Sciatic nerve (tissue), 2 donors: ENCODE measurements at regions of chr16 and their contacts with region 1.

Region 1: DNA sequence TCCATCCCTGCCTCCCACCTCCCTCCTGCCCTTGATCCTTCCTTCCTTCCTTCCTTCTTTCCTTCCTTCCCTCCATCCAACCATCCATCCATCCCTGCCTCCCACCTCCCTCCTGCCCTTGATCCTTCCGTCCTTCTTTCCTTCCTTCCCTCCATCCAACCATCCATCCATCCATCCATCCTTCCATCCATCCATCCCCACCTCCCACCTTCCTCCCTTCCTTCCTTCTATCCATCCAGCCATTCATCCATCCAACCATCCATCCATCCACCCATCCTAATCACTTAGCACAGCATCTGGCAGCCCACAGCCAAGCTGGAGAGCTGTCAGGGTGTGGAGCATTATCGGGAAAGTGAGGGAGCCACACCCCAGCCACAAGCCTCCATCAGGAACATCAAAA is 54.5 kb downstream of the TK2 start:
- DNase-seq: peak; percentile 14
- ATAC-seq: no peak

Region 2: DNA sequence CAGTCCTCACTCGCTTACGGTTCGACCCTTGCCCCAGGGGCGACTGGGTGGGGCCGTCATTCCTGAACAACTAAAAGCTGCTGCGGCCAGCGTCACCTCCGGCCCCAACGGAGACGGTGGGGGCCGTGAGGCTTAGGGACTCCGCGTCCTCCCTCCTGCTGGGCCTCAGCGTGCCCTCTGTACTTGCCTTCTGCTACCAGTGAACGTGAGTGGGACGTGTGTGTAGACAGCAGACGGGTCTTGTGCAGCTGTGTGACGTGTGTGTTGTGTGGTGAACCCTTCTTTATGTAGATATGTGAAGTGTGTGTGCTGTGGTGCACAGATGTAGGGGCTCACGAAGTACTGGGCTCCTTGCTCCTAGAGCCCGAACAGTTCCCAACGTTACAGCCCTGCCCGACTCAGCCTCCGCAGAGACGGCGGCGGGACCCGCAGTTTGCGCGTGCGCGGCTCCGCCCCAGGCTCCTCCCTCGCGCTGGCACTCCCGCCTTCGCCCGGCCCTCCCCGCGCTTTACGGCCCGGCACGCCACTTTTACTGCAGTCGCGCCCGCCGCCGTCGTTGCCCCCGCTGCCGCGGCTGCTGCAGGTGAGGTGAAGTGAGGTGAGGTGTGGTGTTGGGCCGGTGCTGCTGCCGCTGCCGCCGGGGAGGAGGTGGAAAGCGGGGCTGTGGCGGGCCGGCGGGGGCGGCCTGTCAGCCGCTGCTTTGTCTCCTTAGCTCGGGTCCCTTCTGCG is 614.1 kb after region 1 on chr16 and contains the start of gene PHAF1:
- intact Hi-C with region 1: loop called (anchors 5 kb)
- DNase-seq: peak; percentile 96
- ATAC-seq: peak; percentile 97
- total RNA-seq, gene PHAF1: 13.2 TPM